Activated T-helper 1 cell treated with anti-CD3 and anti-CD28 coated beads, Interleukin-12 subunit alpha, Interleukin-12 subunit beta, Interleukin-2, Interleukin-4 antibody, amounts not matched to agents 30 ng/mL and 10 ng/mL and 1 ng/mL, durations not matched to agents 14 hours and 24 hours and 36 hours (primary cell): ENCODE measurements at regions of chr10 and their contacts with region 1.

Region 1: DNA sequence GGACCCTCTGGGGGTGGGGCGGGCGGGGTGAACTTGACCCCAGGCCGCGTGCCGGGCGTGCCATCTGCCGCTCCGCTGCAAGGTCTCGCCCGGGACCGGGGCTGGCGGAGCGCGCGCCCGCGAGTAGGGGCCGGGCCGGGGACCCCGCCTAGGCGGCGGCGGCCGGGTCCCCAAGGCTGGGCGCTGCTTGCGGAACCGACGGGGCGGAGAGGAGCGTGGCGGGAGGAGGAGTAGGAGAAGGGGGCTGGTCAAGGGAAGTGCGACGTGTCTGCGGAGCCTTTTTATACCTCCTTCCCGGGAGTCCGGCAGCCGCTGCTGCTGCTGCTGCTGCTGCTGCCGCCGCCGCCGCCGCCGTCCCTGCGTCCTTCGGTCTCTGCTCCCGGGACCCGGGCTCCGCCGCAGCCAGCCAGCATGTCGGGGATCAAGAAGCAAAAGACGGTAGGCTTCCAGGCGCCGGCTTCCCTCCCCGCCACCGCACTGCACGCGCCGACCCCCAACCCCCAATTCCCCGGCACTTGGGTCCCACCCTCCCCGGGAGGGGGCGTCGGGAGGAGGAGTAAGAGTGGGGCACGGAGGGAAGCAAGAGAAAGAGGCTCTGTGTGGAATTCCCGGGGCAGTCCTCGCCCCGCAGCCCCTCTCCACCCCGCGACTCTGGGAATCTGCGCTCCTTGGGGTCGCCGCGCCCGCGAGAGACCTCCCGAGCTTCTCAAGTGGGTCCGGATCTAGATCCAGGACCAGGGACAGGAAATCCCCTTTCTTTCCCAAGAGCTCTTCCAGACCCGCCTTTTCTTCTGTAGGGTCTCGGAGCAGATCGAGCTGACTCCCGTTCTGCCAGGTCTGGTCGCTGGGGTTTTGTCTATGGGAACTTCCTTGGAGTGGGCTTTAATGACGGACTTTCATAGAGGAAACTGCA is at the start of gene PAPSS2:
- DNase-seq: no peak
- H3K4me3 Mint-ChIP-seq: peak within 1 kb of the TSS; percentile 81
- H3K27ac Mint-ChIP-seq: no peak within 1 kb of the TSS
- H3K4me1 Mint-ChIP-seq: peaks cover 17% of the 10 kb centered on the region
- H3K27me3 Mint-ChIP-seq: peaks cover 49% of the 10 kb centered on the region
- total RNA-seq, gene PAPSS2: 0.07 and 0.21 TPM in 2 replicates

Region 2: DNA sequence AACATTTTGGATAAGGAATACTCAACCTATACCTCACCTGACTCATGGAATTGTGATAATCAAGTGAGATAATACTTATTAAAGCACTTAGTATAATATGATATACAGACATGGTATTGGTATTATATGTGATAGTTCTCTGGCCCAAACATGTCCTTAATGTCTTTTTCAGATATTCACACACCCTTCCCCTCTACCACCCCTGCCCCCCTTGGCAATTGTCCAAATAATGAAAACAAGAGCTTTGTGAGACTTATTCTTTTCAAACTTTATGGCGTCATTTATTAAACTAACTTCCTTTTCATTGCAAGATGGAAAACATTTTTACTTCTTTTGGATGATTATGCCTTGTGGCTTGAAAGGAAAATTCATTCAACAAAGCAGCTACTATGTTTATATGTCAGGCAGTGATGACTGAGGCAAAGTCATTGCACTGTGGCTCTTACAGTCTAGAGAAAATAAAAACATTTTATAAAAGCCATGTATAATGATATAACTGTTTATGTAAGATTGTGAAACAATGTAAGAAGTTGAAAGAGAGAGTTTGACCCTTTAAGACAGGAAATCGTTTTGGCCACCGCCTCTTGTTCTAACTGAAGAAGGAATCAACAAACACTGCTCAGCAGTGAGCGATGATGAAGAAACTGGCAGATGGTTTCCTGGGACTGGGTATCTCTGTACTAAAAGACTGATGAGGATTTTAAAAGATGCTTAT is 127.8 kb before region 1 on chr10:
- intact Hi-C with region 1: loop called (anchors 5 kb)
- DNase-seq: no peak
- H3K4me3 Mint-ChIP-seq: no peak overlapping the region
- H3K27ac Mint-ChIP-seq: no peak overlapping the region
- H3K4me1 Mint-ChIP-seq: peaks cover under 1% of the 10 kb centered on the region
- H3K27me3 Mint-ChIP-seq: no peaks in the 10 kb centered on the region

Region 3: DNA sequence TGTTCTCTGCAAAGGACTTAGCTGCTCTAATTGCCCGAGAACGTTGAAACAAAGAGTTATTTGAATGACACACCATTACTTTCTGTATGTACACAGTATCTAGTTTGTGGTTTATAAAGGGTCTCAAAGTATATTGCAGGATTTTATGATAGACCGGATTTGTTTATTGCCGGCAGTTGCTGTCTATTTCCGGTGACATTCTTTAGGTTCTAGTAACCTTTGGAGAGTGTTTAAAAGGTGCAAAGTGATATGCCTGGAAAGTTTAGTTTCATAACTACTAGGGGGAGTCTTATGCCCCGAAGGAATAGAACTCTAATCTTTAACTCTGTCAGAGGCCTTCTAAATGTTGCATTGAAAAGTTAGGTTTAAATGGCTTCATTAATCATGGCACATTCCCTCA is 63.7 kb after region 1 on chr10:
- intact Hi-C with region 1: no loop called
- DNase-seq: no peak
- H3K4me3 Mint-ChIP-seq: no peak overlapping the region
- H3K27ac Mint-ChIP-seq: no peak overlapping the region
- H3K4me1 Mint-ChIP-seq: no peaks in the 10 kb centered on the region
- H3K27me3 Mint-ChIP-seq: peaks cover 18% of the 10 kb centered on the region

Region 4: DNA sequence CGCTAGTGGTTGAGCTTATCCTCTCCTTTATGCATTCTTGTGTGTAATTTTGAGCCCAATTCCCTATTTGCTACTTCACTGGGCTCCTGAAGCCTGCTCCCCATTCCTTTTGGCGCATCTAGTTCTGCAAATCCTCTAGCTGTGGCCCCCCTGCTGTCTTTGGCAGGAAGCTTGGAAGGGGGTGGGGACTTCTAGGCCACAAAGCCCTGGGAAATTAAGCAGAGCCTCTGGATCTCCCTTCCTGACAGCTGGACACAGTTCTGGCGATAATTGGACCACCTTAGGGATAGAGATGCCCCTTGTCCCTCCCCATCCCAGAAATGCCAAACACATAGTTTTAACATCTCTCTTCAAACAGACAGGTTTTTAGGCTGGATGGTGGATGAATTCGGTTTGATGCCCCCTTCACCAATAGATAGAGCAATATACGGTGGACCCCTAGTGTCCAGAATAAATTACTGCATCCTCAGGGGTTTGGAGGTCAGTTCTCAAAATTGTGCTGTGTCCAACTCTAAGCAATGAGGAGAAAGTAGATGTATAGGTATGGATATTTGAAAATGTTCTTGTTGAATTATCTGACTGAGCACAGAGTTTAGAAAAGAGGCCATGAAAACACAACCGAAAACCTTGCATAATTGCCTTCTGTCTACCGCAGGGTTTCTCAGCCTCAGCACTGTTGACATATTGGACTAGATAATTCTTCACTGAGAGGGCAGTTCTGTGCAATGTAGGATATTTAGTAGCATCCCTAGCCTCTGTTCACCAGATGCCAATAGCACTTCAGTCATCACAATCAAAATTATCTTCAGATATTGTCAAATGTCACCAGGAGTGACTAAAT is 75.4 kb after region 1 on chr10:
- intact Hi-C with region 1: loop called (anchors 2 kb)
- DNase-seq: no peak
- H3K4me3 Mint-ChIP-seq: no peak overlapping the region
- H3K27ac Mint-ChIP-seq: no peak overlapping the region
- H3K4me1 Mint-ChIP-seq: no peaks in the 10 kb centered on the region
- H3K27me3 Mint-ChIP-seq: peaks cover 18% of the 10 kb centered on the region

Region 5: DNA sequence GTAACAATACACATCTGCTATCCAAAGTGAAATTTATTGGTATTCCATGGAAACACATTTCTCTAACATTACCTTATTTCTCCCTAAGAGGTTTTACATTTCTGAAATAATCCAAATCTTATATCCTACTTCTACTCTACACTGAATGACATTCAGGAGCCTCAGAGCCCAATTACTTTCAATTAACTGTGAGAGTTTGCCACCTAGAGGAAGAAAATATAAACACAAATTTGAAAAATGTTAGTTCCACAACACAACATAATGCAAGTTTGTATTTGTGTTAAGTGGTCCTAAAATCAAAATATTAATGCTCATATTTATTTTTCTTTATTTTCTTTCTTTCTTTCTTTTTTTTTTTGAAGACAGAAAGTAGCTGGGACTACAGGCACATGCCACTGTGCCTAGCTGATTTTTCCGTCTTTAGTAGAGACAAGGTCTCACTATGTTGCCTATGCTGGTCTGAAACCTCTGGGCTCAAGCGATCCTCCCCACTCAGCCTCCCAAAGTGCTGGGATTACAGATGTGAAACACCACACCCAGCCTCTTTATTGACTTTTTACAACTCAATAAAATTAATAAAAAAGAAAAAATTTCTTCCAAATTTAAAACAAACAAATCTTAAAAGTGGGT is 112.2 kb after region 1 on chr10:
- intact Hi-C with region 1: loop called (anchors 1 kb)
- DNase-seq: no peak
- H3K4me3 Mint-ChIP-seq: no peak overlapping the region
- H3K27ac Mint-ChIP-seq: no peak overlapping the region
- H3K4me1 Mint-ChIP-seq: peaks cover 5% of the 10 kb centered on the region
- H3K27me3 Mint-ChIP-seq: no peaks in the 10 kb centered on the region